Mammary epithelial cell (primary cell): ENCODE measurements at regions of chr10 and their contacts with region 1.

Region 1: GRCh38 chr10:119667562-119668328 is 16.6 kb downstream of the BAG3 start:
- DNase-seq: peak; percentile 96
- H3K4me3 ChIP-seq: no peak overlapping the region
- H3K27ac ChIP-seq: peak overlapping the region; percentile 64
- H3K4me1 ChIP-seq: peaks cover 71% of the 10 kb centered on the region
- H3K27me3 ChIP-seq: no peaks in the 10 kb centered on the region
- CTCF ChIP-seq: peak in 1 of 2 donors; percentile 25

Region 2: DNA sequence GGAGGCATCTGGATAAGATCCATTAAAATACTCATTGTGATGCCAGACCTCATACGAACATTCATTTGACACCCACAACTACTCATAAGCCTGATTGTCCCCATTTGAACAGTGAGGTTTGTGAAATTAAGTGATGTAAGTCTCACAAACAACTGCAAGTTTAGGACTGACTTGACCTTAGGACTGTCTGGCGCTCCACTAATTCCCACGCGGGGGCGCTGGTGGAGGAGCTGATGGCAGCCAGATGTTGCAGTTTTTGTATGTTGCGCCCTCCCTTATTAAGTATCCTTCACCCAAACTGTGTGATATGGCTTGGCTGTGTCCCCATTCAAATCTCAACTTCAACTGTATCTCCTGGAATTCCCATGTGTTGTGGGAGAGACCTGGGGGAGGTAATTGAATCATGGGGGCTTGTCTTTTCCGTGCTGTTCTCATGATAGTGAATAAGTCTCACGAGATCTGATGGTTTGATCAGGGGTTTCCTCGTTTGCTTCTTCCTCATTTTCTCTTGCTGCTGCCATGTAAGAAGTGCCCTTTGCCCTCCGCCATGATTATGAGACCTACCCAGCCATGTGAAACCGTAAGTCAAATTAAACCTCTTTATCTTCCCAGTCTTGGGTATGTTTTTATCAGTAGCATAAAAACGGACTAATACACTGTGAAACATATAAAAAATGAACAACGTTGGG is 50.7 kb before region 1 on chr10:
- CTCF ChIA-PET with region 1: no interaction called
- dilution Hi-C with region 1: no loop called
- in situ Hi-C with region 1: no loop called
- intact Hi-C with region 1: no loop called
- DNase-seq: no peak
- H3K4me3 ChIP-seq: no peak overlapping the region
- H3K27ac ChIP-seq: no peak overlapping the region
- H3K4me1 ChIP-seq: peaks cover 8% of the 10 kb centered on the region
- H3K27me3 ChIP-seq: no peaks in the 10 kb centered on the region
- CTCF ChIP-seq: no peak

Region 3: DNA sequence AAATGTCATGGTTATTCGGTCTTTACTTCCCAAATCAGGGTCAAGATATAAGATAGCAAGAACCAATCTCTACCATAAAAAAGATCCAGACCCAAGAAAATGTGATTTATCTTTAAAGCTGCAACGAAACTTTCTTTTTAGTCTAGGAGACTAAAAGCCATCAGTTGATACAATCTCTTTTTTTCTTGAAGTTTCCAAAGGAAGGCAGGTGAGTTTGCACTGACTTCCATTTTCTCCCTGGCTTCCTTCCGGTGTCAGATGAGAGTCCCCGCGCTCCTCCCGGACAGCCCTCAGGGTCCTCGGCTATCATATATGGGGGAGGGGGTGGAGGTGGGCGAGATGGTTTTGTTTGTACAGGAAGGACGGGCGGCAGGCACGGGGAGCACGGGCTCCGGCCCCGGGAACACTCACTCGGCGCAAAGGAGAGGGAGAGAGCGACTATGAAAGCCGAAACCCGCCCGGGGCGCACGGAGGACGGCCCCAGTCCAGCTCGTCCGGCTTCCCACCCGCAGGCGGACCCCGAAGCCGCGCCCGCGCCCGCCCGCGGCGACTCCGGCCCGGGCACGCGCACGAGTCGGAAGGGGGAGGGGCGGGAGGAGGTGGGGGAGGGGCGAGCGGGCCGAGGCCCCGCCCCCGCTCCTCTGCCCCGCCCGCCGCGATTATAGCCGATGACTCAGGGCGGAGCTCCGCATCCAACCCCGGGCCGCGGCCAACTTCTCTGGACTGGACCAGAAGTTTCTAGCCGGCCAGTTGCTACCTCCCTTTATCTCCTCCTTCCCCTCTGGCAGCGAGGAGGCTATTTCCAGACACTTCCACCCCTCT is 16.8 kb before region 1 on chr10 and contains the start of gene BAG3:
- CTCF ChIA-PET with region 1: no interaction called
- dilution Hi-C with region 1: no loop called
- in situ Hi-C with region 1: no loop called
- intact Hi-C with region 1: loop called (anchors 1 kb)
- DNase-seq: peak; percentile 92
- H3K4me3 ChIP-seq: peak within 1 kb of the TSS; percentile 95 to 97 (median 96)
- H3K27ac ChIP-seq: peak within 1 kb of the TSS; percentile 77
- H3K4me1 ChIP-seq: peaks cover 24% of the 10 kb centered on the region
- H3K27me3 ChIP-seq: no peaks in the 10 kb centered on the region
- CTCF ChIP-seq: no peak
- total RNA-seq, gene BAG3: 41.0 to 117 TPM

Region 4: DNA sequence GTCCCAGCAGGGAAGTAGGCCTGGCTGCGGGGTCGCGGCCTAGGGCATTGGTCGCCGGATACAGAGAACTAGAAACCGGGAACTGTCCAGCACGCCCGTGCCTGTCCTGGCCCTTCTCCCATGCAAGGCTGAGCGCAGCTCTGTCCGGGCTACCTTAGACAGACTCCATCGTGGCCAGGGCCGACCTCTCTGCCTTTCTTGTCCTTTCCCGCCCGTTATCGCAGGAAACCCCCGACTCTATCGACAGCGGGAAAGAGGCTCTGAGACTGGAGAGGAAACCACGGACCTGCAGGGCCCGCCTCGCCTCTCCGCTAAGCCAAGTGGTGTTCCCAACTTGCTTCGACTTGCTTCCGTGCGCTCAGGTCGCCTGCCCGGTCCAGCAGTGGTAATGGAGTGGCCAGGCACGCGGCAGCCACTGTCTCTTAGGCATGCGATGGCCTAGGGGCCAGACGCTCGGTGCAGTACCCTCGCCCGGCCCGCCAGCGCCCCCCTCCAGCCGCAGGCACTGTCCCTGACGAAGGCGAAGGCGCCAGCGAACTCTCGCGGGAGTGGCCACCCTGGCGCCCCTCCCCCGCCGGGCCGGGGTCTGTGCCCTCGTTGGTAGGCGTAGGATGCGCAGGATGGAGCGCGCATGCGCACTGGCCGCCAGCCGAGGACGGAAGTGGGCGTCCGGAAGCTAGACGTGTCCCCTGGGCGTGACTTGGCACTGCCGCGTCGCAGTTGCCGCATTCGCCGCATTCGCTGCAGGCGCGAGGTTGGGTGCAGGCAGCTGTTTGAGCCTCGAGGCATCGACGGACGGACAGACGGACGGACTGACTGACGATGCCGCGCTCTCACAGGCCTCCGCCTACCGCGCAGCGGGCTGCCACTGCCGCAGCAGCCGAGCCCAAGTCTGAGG is 150.5 kb after region 1 on chr10:
- CTCF ChIA-PET with region 1: no interaction called
- dilution Hi-C with region 1: no loop called
- in situ Hi-C with region 1: no loop called
- intact Hi-C with region 1: no loop called
- DNase-seq: no peak
- H3K4me3 ChIP-seq: peak overlapping the region in 2 of 3 experiments; percentile 38 to 40
- H3K27ac ChIP-seq: no peak overlapping the region
- H3K4me1 ChIP-seq: peaks cover 11% of the 10 kb centered on the region
- H3K27me3 ChIP-seq: no peaks in the 10 kb centered on the region
- CTCF ChIP-seq: no peak